Activated CD4-positive, alpha-beta memory T cell treated with anti-CD3 and anti-CD28 coated beads for 36 hours (primary cell): ENCODE measurements at regions of chr4 and their contacts with region 1.

Region 1: GRCh38 chr4:20422398-20422797 is 170.7 kb downstream of the SLIT2 start:
- DNase-seq: peak; percentile 44
- H3K4me3 Mint-ChIP-seq: no peak overlapping the region
- H3K27ac Mint-ChIP-seq: no peak overlapping the region
- H3K4me1 Mint-ChIP-seq: peaks cover 4% of the 10 kb centered on the region
- H3K27me3 Mint-ChIP-seq: peaks cover 4% of the 10 kb centered on the region

Region 2: GRCh38 chr4:19844446-19844845 is 578.0 kb before region 1 on chr4:
- CTCF ChIA-PET with region 1: no interaction called
- POLR2A ChIA-PET with region 1: no interaction called
- intact Hi-C with region 1: no loop called
- DNase-seq: no peak
- H3K4me3 Mint-ChIP-seq: no peak overlapping the region
- H3K27ac Mint-ChIP-seq: no peak overlapping the region
- H3K4me1 Mint-ChIP-seq: no peaks in the 10 kb centered on the region
- H3K27me3 Mint-ChIP-seq: no peaks in the 10 kb centered on the region

Region 3: GRCh38 chr4:20408611-20409010 is 13.8 kb before region 1 on chr4:
- CTCF ChIA-PET with region 1: no interaction called
- POLR2A ChIA-PET with region 1: no interaction called
- intact Hi-C with region 1: no loop called
- DNase-seq: no peak
- H3K4me3 Mint-ChIP-seq: no peak overlapping the region
- H3K27ac Mint-ChIP-seq: no peak overlapping the region
- H3K4me1 Mint-ChIP-seq: no peaks in the 10 kb centered on the region
- H3K27me3 Mint-ChIP-seq: no peaks in the 10 kb centered on the region

Region 4: GRCh38 chr4:20544645-20545044 is 122.2 kb after region 1 on chr4:
- CTCF ChIA-PET with region 1: no interaction called
- POLR2A ChIA-PET with region 1: no interaction called
- intact Hi-C with region 1: loop called (anchors 1 kb)
- DNase-seq: no peak
- H3K4me3 Mint-ChIP-seq: no peak overlapping the region
- H3K27ac Mint-ChIP-seq: no peak overlapping the region
- H3K4me1 Mint-ChIP-seq: no peaks in the 10 kb centered on the region
- H3K27me3 Mint-ChIP-seq: peaks cover 2% of the 10 kb centered on the region

Region 5: DNA sequence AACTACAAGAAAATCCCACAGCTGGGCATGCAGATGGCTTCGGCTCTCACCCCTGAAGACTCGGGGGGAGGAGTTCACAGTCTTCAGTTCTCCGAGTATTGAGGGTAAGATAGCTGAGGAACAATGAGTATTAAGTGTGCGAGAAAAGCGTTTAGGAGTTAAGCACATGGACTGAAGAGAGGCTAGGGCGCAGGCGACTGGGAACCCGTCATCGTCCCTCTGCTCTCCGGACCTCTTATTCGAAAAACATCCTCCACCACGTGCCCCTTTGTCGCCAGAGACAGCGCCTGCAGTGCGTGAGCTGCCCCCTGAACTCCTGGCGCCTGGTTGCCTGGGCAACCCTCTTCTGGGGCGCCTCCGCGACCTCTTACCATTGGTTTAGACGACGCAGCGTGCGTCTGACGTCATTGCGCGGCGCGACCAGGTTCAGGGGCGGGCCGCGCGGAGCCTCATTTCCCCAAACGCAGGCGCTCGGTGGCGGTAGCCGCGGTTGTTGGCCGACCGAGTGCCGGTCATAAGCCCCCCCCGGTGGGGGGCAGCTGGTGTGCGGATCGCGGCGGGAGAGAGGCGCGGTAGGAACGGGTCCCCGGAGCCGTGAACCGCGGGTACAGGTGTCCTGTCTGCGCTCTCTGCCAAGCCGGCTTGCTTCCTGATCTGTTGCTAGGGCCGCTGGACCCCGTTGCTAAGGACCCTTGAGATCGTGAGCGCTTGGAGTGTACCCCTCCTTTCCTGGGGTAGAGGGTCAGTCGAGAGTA is 277.8 kb after region 1 on chr4 and contains the start of gene PACRGL:
- CTCF ChIA-PET with region 1: interaction called, 3 read pairs
- POLR2A ChIA-PET with region 1: no interaction called
- intact Hi-C with region 1: loop called (anchors 1 kb)
- DNase-seq: peak; percentile 94
- H3K4me3 Mint-ChIP-seq: peak within 1 kb of the TSS; percentile 87
- H3K27ac Mint-ChIP-seq: peak within 1 kb of the TSS; percentile 78
- H3K4me1 Mint-ChIP-seq: peaks cover 33% of the 10 kb centered on the region
- H3K27me3 Mint-ChIP-seq: peaks cover 2% of the 10 kb centered on the region
- total RNA-seq, gene PACRGL: 9.8 to 10.5 TPM